G401 (cell line): ENCODE measurements at regions of chr2 and their contacts with region 1.

Region 1: GRCh38 chr2:241208058-241208457 is 19.6 kb downstream of the ANO7 start:
- DNase-seq: no peak

Region 2: GRCh38 chr2:240913810-240914644 is 294.0 kb before region 1 on chr2:
- in situ Hi-C with region 1: no loop called
- DNase-seq: peak; percentile 89

Region 3: GRCh38 chr2:241081643-241082340 is 126.3 kb before region 1 on chr2:
- in situ Hi-C with region 1: loop called (anchors 5 kb)
- DNase-seq: peak; percentile 4

Region 4: DNA sequence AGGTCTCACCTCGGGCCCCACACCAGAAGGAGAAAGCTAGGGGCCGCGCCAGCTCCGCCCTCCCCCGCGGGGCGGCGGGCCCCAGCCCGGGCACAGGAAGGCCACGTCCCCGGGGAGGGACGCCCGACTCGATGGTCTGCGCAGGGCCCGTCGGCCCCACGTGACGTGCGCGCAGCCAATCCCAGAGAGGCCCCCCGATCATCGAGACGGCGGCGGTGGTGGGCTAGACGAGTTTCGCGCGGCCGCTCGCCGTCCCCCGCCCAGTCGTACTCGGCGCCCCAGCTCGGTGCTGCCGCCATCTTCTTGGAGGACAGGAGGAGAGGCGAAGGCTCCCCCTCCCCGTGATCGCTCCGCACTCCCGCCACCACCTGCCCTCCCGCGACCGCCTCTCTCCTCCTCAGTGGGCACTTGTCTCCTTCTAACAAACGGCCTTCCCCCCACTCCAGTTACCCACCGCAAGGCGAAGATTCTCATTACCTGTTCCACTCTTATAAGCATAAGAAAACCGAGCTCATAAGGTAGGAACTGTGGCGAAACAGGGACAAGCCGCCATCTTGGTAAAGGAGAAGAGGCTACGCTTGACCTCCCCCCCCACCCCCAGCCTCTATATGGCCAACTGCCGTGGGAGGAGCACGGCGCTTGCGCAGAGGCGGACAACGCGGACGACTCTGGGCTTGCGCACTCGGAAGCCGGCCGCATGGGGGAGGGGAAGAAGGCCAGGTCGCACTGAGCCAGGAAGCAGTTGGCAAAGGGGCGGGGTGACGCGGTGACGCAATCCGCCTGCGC is 107.2 kb after region 1 on chr2 and contains the start of gene HDLBP:
- in situ Hi-C with region 1: no loop called
- DNase-seq: peak; percentile 96
- total RNA-seq, gene HDLBP: 386 and 442 TPM in 2 replicates

Region 5: DNA sequence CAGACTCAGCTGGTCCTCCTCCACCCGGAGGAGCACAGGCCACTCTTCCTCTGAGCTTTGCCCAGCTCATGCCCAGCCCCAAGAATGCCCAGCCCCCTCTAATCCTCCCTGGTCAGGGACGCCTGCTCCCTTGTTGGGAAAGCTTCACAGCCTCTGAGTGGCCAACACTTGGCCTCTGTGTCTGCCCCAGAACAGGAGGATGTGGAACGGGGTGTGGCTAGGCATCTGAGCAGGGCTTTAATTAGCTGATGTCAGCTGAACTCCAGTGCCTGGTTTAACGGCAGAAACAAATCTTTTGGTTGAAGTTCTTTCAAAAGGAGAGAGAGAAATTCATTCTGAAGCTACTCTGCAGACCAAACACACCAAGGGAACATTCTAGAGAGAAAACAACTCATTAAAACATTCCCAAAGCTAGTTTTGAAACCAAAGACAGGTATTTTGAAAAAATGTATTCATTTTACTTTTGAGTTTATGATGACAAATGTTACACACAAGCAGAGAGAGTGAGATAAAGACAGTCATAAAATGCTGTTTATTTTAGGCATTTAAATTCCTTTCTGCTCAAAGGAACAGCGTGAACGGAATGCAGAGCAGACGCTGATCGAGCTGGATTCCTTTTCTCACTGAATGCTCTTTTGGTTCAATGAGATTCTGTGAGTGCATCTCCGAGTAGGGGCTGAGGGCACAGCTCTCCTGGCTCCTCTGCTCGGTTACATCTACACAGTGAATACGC is 725.3 kb after region 1 on chr2:
- in situ Hi-C with region 1: no loop called
- DNase-seq: no peak